IMR-90 (cell line): ENCODE measurements at regions of chr7 and their contacts with region 1.

Region 1: DNA sequence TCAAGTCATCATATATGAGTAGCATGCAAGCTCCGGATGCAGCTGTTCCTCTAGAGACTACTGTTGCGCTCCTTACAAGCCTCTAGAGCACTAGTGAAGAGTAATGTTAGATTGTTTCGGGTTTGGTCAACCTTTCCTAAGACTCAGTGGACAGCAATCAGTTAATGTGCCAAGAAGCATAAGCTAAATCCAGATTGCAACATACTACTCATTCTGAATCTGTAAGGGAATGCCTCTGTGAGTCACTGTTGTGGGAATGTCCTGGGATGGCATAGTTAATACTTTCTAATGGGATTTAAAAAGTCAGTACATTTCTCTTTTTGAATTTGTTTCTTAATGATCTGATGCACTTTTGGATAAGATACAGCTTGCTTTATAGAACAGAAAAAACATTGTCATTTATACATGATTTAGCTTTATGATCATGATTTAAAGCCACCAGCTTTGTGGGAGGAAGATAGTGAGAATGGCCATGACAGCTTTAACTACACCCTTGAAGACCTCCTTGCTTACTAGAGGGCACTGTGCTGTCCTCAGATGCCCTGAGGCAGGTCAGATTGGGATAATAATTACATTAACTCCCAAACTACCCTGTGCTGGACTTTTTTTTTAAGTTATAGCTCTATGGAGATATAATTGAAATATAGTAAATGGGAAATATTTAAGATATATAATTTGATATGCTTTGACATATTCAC is 138.4 kb downstream of the SDK1 start:
- DNase-seq: peak; percentile 99
- ATAC-seq: peak; percentile 87
- H3K4me3 ChIP-seq: no peak overlapping the region
- H3K27ac ChIP-seq: peak overlapping the region; percentile 61; the same call in 1 of the 2 replicates
- H3K4me1 ChIP-seq: peaks cover 7% of the 10 kb centered on the region
- H3K27me3 ChIP-seq: no peaks in the 10 kb centered on the region
- CTCF ChIP-seq: no peak
- POLR2A ChIP-seq: no peak
- RAD21 ChIP-seq: no peak

Region 2: GRCh38 chr7:3575753-3576531 is 136.5 kb after region 1 on chr7:
- CTCF ChIA-PET with region 1: no interaction called
- POLR2A ChIA-PET with region 1: no interaction called
- dilution Hi-C with region 1: no loop called
- in situ Hi-C with region 1: no loop called
- intact Hi-C with region 1: no loop called
- DNase-seq: no peak
- ATAC-seq: no peak
- H3K4me3 ChIP-seq: no peak overlapping the region
- H3K27ac ChIP-seq: no peak overlapping the region
- H3K4me1 ChIP-seq: no peaks in the 10 kb centered on the region
- H3K27me3 ChIP-seq: no peaks in the 10 kb centered on the region
- CTCF ChIP-seq: no peak
- POLR2A ChIP-seq: no peak
- RAD21 ChIP-seq: no peak

Region 3: DNA sequence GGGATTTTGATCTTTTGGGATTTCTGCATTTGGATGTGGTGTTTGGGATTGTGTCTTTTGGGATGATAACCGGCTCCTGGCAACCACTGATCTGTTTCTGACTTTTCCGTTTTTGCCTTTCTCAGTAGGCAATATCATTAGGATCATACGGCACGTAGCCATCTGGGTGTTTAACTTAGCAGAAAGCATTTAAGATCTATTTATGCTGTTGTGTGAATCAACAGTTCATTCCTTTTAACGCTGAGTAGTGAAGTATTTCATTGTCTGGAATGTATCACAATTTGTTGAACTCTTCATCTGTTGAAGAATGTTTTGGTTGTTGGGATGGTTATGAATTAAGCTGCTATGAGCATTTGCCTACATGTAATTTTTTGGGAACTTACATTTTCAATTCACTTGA is 321.2 kb after region 1 on chr7:
- CTCF ChIA-PET with region 1: no interaction called
- POLR2A ChIA-PET with region 1: no interaction called
- dilution Hi-C with region 1: no loop called
- in situ Hi-C with region 1: no loop called
- intact Hi-C with region 1: loop called (anchors 2 kb)
- DNase-seq: peak; percentile 16
- ATAC-seq: peak; percentile 15; the same call in 1 of the 2 replicates
- H3K4me3 ChIP-seq: no peak overlapping the region
- H3K27ac ChIP-seq: no peak overlapping the region
- H3K4me1 ChIP-seq: peaks cover 5% of the 10 kb centered on the region; the same call in 1 of the 2 replicates
- H3K27me3 ChIP-seq: peaks cover 1% of the 10 kb centered on the region; the same call in 1 of the 2 replicates
- CTCF ChIP-seq: no peak
- POLR2A ChIP-seq: no peak
- RAD21 ChIP-seq: no peak

Region 4: GRCh38 chr7:3995187-3995586 is 555.7 kb after region 1 on chr7:
- CTCF ChIA-PET with region 1: no interaction called
- POLR2A ChIA-PET with region 1: no interaction called
- dilution Hi-C with region 1: no loop called
- in situ Hi-C with region 1: no loop called
- intact Hi-C with region 1: no loop called
- DNase-seq: no peak
- ATAC-seq: no peak
- H3K4me3 ChIP-seq: no peak overlapping the region
- H3K27ac ChIP-seq: no peak overlapping the region
- H3K4me1 ChIP-seq: peaks cover 11% of the 10 kb centered on the region; the same call in 1 of the 2 replicates
- H3K27me3 ChIP-seq: no peaks in the 10 kb centered on the region; the same call in 1 of the 2 replicates
- CTCF ChIP-seq: no peak
- POLR2A ChIP-seq: no peak
- RAD21 ChIP-seq: no peak